ENCODE measurements at regions of chr11 and their contacts with region 1.

Region 1: DNA sequence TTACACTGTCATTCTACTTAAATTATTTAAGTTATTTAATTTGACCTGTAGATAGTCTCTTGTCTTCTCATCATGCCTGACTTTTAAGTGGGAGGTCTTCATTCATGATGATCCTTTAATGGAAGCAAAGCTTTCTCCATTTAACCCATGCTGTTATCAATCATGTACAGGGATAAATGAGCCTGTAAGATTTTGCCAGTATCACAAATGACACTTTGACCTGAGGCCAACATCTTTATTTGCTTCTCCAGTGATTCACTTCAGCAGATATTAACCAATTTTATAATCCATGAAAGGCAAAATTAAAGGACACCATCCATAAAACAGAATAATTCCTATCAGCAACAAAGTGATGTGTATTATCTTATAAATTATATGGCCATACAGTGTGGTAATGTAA is 7.7 kb downstream of the CCDC73 start:
- DNase-seq: no peak
- CTCF ChIP-seq: no peak

Region 2: GRCh38 chr11:32615422-32615821 is 171.4 kb before region 1 on chr11:
- in situ Hi-C with region 1: no loop called
- DNase-seq: peak; percentile 11
- CTCF ChIP-seq: peak; percentile 54

Region 3: GRCh38 chr11:32751381-32751780 is 35.4 kb before region 1 on chr11:
- in situ Hi-C with region 1: loop called (anchors 5 kb)
- DNase-seq: no peak
- CTCF ChIP-seq: no peak